ENCODE measurements at regions of chr2 and their contacts with region 1.

Region 1: DNA sequence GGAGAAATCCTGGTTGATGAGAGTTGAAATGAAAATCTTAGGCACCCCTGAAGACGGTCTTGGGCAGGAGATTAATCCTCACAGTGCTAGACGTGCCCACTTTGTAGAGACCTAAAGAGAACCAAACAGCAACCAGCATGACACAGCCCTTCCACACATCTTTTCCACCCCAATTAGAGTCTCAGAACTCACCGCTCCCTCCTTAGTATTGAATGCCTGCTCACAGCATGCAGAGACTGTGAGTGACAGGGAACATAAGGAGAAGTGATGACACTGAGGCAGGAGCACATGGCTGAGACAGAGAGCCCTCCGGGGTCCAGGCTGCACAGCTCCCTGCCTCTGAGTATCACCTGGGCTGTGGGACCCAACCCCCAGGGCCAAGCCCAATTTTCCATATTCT is 367.6 kb downstream of the EIPR1 start:
- DNase-seq: no peak
- H3K4me3 ChIP-seq: no peak overlapping the region
- H3K27ac ChIP-seq: no peak overlapping the region
- H3K4me1 ChIP-seq: no peaks in the 10 kb centered on the region
- H3K27me3 ChIP-seq: peaks cover 0 to 45% of the 10 kb centered on the region in 2 donors
- CTCF ChIP-seq: no peak
- POLR2A ChIP-seq: no peak

Region 2: GRCh38 chr2:2318949-2319348 is 691.1 kb before region 1 on chr2:
- intact Hi-C with region 1: no loop called
- DNase-seq: no peak
- H3K4me3 ChIP-seq: no peak overlapping the region
- H3K27ac ChIP-seq: no peak overlapping the region
- H3K4me1 ChIP-seq: no peaks in the 10 kb centered on the region
- H3K27me3 ChIP-seq: no peaks in the 10 kb centered on the region
- CTCF ChIP-seq: no peak
- POLR2A ChIP-seq: no peak

Region 3: GRCh38 chr2:2681711-2682251 is 328.2 kb before region 1 on chr2:
- intact Hi-C with region 1: no loop called
- DNase-seq: no peak
- H3K4me3 ChIP-seq: no peak overlapping the region
- H3K27ac ChIP-seq: no peak overlapping the region
- H3K4me1 ChIP-seq: no peaks in the 10 kb centered on the region
- H3K27me3 ChIP-seq: no peaks in the 10 kb centered on the region
- CTCF ChIP-seq: no peak
- POLR2A ChIP-seq: no peak

Region 4: DNA sequence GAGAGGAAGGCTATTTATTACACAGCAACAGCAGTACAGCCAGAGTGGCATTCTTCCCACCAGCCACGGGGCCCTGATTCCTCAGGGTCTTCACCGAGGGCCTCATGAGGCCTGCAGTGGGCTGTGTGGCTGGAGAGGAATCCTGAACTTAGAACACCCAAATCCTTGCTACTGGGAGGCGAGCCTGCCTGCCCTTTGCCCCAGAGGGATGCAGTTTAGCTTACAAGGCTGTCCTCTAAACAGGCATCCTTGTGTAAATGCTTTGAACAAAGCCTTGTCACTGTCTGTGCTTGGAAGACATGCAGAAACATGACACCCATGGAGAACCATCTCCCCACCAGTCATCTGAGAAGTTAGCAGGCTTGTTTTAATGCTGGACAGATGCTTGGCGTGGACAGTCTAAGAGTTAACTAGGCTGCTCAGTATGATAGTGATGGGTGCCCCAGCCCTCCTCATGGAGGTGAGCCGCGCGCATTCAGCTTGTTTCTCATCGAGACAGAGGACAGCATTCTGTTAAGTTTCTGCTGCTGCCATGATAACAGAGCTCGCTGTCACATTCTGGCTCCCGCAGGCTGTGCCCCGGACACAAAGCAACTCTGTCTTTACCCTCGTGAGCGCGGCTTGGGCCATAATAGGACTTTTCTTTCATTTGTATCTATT is 466.4 kb after region 1 on chr2:
- intact Hi-C with region 1: loop called (anchors 5 kb)
- DNase-seq: no peak
- H3K4me3 ChIP-seq: no peak overlapping the region
- H3K27ac ChIP-seq: no peak overlapping the region
- H3K4me1 ChIP-seq: peaks cover 0 to 3% of the 10 kb centered on the region in 2 donors
- H3K27me3 ChIP-seq: no peaks in the 10 kb centered on the region
- CTCF ChIP-seq: no peak
- POLR2A ChIP-seq: no peak

Measured in breast epithelium (tissue), 4 donors.